ENCODE measurements at regions of chr5 and their contacts with region 1.

Region 1: DNA sequence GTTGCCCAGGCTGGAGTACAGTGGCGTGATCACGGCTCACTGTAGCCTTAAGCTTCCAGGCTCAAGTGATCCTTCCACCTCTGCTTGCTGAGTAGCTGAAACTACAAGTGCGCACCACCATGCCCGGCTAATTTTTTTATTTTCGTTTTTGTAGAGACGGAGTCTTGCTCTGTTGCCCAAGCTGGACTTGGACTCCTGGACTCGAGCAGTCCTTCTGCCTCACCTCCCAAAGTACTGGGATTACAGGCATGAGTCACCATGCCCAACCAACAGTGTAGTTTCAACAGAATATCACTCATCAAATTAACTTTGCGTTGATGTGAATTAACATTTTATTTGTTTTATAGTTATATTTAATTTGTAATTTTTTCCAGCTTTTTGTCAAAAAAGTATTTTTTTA is 45.3 kb downstream of the WDR70 start:
- DNase-seq: no peak
- ATAC-seq: no peak
- H3K4me3 ChIP-seq: no peak overlapping the region
- H3K27ac ChIP-seq: no peak overlapping the region
- H3K4me1 ChIP-seq: no peaks in the 10 kb centered on the region
- H3K27me3 ChIP-seq: no peaks in the 10 kb centered on the region
- CTCF ChIP-seq: no peak

Region 2: GRCh38 chr5:37437711-37438110 is 13.3 kb after region 1 on chr5:
- CTCF ChIA-PET with region 1: interaction called, 4 read pairs
- POLR2A ChIA-PET with region 1: interaction called, 17 read pairs
- in situ Hi-C with region 1: no loop called
- intact Hi-C with region 1: no loop called
- DNase-seq: no peak
- ATAC-seq: no peak
- H3K4me3 ChIP-seq: no peak overlapping the region
- H3K27ac ChIP-seq: no peak overlapping the region
- H3K4me1 ChIP-seq: no peaks in the 10 kb centered on the region
- H3K27me3 ChIP-seq: no peaks in the 10 kb centered on the region
- CTCF ChIP-seq: no peak

Region 3: DNA sequence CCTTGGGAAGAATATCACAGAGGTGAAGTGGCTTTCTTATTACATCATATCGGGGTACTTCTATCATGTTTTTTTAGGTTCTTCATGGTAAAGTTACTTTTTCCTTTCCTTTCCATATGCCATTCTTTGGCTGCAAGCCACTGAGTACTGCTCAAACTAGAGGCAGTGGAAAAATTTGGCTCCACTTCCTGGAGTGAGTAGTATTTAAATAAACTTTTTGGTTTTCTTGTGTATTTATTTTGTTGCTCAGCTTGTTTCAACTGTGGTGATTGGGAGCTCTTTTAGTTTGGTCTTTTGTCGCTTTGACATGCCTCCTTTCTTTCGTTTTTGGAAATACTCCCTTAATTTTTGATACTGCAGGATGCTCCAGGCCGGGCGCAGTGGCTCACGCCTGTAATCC is 24.5 kb after region 1 on chr5:
- CTCF ChIA-PET with region 1: no interaction called
- POLR2A ChIA-PET with region 1: no interaction called
- in situ Hi-C with region 1: no loop called
- intact Hi-C with region 1: no loop called
- DNase-seq: no peak
- ATAC-seq: no peak
- H3K4me3 ChIP-seq: no peak overlapping the region
- H3K27ac ChIP-seq: no peak overlapping the region
- H3K4me1 ChIP-seq: no peaks in the 10 kb centered on the region
- H3K27me3 ChIP-seq: no peaks in the 10 kb centered on the region
- CTCF ChIP-seq: no peak

Region 4: DNA sequence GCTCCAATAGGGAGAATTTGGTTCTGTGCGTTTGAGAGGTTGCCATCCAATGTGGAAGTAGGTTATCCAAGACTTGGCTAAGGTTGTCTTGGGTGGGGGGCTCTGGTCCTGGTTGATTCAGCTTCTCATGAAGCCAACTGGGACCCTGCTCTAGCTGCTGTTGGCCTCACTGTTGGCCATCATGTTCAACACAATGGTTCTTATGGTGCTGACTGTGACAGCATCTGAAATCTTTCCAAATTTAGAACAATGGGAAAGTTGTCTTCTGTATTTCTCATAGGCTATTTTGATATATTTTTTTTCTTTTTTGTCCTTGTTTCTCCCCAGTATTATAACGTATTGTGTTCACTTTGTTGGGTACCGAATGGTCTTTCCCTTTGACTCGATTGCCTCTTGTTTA is 343.5 kb after region 1 on chr5:
- CTCF ChIA-PET with region 1: no interaction called
- POLR2A ChIA-PET with region 1: interaction called, 10 read pairs
- in situ Hi-C with region 1: no loop called
- intact Hi-C with region 1: no loop called
- DNase-seq: no peak
- ATAC-seq: no peak
- H3K4me3 ChIP-seq: no peak overlapping the region
- H3K27ac ChIP-seq: no peak overlapping the region
- H3K4me1 ChIP-seq: no peaks in the 10 kb centered on the region
- H3K27me3 ChIP-seq: no peaks in the 10 kb centered on the region
- CTCF ChIP-seq: no peak

Measured in Panc1 (cell line).